GM12878 (cell line): ENCODE measurements at regions of chr12 and their contacts with region 1.

Region 1: DNA sequence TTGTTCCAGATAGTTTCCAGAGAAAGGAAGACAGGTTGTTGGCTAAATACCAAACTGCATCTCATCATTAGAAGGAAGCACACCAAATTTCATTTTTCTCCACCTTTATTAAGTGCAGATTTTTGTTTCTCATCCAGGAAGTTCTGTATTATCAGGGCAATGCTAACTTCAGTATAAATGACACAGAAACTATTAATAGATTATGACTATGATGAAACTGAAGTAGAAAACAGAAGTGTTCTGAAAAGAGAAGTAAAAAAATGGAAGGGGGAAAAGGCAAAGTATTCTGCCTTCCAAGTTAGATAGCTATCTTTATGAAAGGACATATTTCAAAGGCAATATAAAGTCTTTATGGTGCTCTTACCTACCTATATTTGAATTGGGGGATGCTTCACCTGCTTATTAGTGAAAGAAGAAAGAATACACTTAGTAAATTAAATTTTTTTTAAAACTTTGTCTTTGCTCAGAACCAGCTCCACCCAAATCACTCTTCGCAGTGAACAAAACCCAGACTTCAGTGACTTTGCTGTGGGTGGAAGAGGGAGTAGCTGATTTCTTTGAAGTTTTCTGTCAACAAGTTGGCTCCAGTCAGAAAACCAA is 223.9 kb downstream of the PTPRO start:
- DNase-seq: peak; percentile 25
- ATAC-seq: peak; percentile 87
- H3K4me3 ChIP-seq: peak overlapping the region; percentile 52
- H3K27ac ChIP-seq: peak overlapping the region; percentile 66
- H3K4me1 ChIP-seq: peaks cover 19% of the 10 kb centered on the region
- H3K27me3 ChIP-seq: no peaks in the 10 kb centered on the region
- CTCF ChIP-seq: no peak
- EP300 ChIP-seq: no peak
- POLR2A ChIP-seq: no peak
- RAD21 ChIP-seq: no peak

Region 2: DNA sequence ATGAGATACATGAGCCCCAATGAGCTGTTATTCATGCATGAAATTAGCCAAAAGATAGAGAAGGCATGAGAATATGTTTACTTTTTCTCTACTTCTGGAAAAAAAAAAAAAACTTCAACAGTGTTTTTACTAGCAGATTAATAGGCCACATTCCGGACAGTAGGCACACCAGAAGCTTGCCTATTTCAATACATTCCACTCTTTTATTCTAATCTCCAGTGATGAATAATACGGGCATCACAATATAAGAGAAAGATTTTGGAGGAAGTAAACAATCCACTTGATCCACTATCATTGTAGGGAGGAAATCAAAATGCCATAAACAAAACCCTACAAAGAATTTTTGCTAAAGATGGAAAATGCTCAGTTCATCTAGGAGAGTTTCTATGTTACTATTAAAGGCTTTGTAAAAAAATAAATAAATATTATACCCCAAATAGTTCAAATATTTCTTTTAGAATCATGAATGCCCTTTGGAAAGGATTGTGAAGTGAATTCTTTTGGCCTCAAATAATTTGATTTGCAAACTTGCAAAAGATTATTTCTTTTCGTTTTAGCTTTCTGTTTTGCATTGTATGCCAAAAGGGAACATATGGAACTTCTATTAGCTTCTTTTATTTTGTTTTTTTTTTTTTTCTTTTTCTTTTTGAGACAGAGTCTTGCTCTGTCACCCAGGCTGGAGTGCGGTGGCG is 10.4 kb after region 1 on chr12:
- CTCF ChIA-PET with region 1: interaction called, 11 read pairs
- POLR2A ChIA-PET with region 1: interaction called, 38 read pairs
- RAD21 ChIA-PET with region 1: interaction called, 43 read pairs
- SMC1A ChIA-PET with region 1: interaction called, 139 read pairs
- in situ Hi-C with region 1: no loop called
- intact Hi-C with region 1: no loop called
- DNase-seq: no peak
- ATAC-seq: no peak
- H3K4me3 ChIP-seq: no peak overlapping the region
- H3K27ac ChIP-seq: no peak overlapping the region
- H3K4me1 ChIP-seq: no peaks in the 10 kb centered on the region
- H3K27me3 ChIP-seq: no peaks in the 10 kb centered on the region
- CTCF ChIP-seq: no peak
- EP300 ChIP-seq: no peak
- POLR2A ChIP-seq: no peak
- RAD21 ChIP-seq: no peak

Region 3: GRCh38 chr12:15563663-15564062 is 17.5 kb after region 1 on chr12:
- CTCF ChIA-PET with region 1: interaction called, 11 read pairs
- POLR2A ChIA-PET with region 1: interaction called, 54 read pairs
- RAD21 ChIA-PET with region 1: interaction called, 43 read pairs
- SMC1A ChIA-PET with region 1: interaction called, 160 read pairs
- in situ Hi-C with region 1: no loop called
- intact Hi-C with region 1: no loop called
- DNase-seq: no peak
- ATAC-seq: no peak
- H3K4me3 ChIP-seq: no peak overlapping the region
- H3K27ac ChIP-seq: no peak overlapping the region
- H3K4me1 ChIP-seq: no peaks in the 10 kb centered on the region
- H3K27me3 ChIP-seq: no peaks in the 10 kb centered on the region
- CTCF ChIP-seq: no peak
- EP300 ChIP-seq: no peak
- POLR2A ChIP-seq: no peak
- RAD21 ChIP-seq: no peak